Dendritic cell treated with granulocyte-macrophage colony-stimulating factor and Interleukin-4, amounts not matched to agents 40 ng/mL and 50 ng/mL, for 4 days (primary cell): ENCODE measurements at regions of chr7 and their contacts with region 1.

Region 1: DNA sequence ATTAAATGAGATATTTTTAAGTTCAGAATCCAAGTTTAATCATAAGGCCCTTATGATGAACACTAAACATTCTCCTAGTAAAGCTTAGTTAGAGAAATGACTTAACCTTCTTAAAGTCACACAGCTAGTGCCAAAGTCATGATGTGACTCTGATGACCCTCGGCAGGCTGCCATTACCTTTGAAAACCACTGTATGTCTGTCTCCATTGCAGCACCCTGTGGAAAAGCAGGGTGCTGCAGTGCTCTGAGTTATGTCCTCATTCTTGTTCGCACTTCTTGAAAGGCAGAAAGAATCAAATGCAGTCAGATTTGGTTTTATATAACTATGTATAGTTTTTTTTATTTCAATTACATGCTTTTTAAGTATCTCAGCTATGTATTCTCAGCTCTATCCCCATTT is 105.0 kb downstream of the PHTF2 start:
- H3K4me3 Mint-ChIP-seq: no peak overlapping the region
- H3K27ac Mint-ChIP-seq: no peak overlapping the region
- H3K4me1 Mint-ChIP-seq: peaks cover 5% of the 10 kb centered on the region
- H3K27me3 Mint-ChIP-seq: no peaks in the 10 kb centered on the region

Region 2: DNA sequence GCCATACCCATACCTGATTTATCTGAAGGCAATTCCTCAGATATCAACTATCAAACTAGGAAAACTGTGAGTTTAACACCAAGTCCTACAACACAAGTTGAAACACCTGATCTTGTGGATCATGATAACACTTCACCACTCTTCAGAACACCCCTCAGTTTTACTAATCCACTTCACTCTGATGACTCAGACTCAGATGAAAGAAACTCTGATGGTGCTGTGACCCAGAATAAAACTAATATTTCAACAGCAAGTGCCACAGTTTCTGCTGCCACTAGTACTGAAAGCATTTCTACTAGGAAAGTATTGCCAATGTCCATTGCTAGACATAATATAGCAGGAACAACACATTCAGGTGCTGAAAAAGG is 276.3 kb before region 1 on chr7:
- intact Hi-C with region 1: no loop called
- H3K4me3 Mint-ChIP-seq: no peak overlapping the region
- H3K27ac Mint-ChIP-seq: no peak overlapping the region
- H3K4me1 Mint-ChIP-seq: no peaks in the 10 kb centered on the region
- H3K27me3 Mint-ChIP-seq: no peaks in the 10 kb centered on the region

Region 3: DNA sequence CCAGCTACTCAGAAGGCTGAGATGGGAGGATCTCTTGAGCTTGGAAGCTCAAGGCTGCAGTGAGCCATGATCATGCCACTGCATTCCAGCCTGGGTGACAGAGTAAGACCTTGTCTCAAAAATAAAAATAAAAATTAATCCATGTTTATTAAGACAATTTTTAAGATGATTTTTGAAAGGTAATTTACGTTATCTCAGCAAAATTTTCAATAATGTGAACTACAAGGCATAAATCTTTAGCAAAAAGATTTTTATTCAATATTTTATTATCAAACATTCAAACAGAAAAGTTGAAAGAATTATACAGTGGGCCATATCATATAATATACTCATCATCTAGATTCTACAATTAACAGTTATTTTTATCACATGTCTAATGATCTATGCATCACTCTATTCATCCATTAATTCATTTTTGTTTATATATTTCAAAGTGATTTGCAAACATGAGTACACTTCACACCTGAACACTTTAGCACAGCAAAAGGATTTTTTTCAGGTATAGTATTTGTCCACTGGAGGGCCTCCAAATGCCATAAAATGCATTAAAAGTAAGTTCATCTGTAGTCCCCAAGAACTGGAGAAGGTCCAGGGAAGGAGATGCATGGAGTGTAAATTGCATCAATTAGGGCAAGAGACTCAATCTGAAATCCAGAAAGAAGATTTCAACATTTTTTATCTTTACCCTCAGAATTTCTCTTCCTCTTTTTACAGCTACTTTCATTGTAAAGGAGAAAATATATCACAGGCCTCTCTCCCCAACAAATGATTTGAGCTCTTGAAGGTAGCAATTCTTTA is 246.0 kb before region 1 on chr7:
- intact Hi-C with region 1: loop called (anchors 10 kb)
- H3K4me3 Mint-ChIP-seq: no peak overlapping the region
- H3K27ac Mint-ChIP-seq: no peak overlapping the region
- H3K4me1 Mint-ChIP-seq: peaks cover 2% of the 10 kb centered on the region
- H3K27me3 Mint-ChIP-seq: no peaks in the 10 kb centered on the region

Region 4: GRCh38 chr7:77855371-77856083 is 48.1 kb before region 1 on chr7:
- intact Hi-C with region 1: loop called (anchors 10 kb)
- H3K4me3 Mint-ChIP-seq: no peak overlapping the region
- H3K27ac Mint-ChIP-seq: no peak overlapping the region
- H3K4me1 Mint-ChIP-seq: peaks cover 31% of the 10 kb centered on the region
- H3K27me3 Mint-ChIP-seq: no peaks in the 10 kb centered on the region

Region 5: DNA sequence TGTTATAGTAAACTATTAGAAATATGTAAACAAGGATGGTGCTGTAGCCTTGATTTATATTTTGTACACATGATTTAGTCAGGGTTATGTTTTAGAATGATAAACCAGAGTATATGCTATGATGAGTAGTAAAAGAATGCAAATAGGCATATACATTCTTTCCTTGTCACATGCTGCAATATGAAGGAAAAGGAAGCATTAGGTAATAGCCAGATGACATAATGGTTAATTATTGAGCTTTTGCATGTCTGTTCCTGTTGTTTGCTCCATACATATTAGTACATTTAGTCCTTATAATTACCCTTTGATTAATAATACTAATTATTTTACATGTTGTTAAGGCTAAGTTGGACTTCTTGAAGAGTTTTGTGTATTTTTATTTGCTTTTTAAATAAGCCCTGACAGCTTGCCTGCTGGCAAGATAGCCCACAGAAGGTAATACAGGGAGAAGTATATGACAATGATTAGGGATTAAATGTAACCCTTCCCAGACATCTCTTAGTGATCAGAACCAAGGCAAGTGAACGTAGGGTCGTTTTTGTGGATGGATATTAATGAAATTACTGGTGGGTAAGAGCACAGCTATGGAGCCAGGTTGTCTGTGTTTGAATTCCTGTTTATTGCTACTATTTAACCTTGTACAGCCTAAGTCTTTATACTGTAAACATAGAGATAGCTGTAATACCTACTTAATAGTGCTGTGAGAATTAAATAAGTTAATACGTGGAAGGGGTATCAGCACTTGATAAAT is 36.6 kb before region 1 on chr7:
- intact Hi-C with region 1: no loop called
- H3K4me3 Mint-ChIP-seq: no peak overlapping the region
- H3K27ac Mint-ChIP-seq: no peak overlapping the region
- H3K4me1 Mint-ChIP-seq: peaks cover 10% of the 10 kb centered on the region
- H3K27me3 Mint-ChIP-seq: no peaks in the 10 kb centered on the region

Region 6: GRCh38 chr7:77954773-77955555 is 51.4 kb after region 1 on chr7:
- intact Hi-C with region 1: no loop called
- H3K4me3 Mint-ChIP-seq: no peak overlapping the region
- H3K27ac Mint-ChIP-seq: no peak overlapping the region
- H3K4me1 Mint-ChIP-seq: peaks cover 5% of the 10 kb centered on the region
- H3K27me3 Mint-ChIP-seq: no peaks in the 10 kb centered on the region